Adrenal gland (tissue), 19 donors: ENCODE measurements at regions of chr14 and their contacts with region 1.

Region 1: GRCh38 chr14:75307700-75308379 is 29.2 kb downstream of the FOS start:
- DNase-seq: peak; percentile 79 to 95 (median 89)
- H3K4me3 ChIP-seq: no peak overlapping the region
- H3K27ac ChIP-seq: no peak overlapping the region
- H3K4me1 ChIP-seq: peaks cover 0 to 10% of the 10 kb centered on the region in 2 donors
- H3K27me3 ChIP-seq: no peaks in the 10 kb centered on the region
- CTCF ChIP-seq: peak; percentile 81 to 94 (median 91)
- POLR2A ChIP-seq: no peak

Region 2: DNA sequence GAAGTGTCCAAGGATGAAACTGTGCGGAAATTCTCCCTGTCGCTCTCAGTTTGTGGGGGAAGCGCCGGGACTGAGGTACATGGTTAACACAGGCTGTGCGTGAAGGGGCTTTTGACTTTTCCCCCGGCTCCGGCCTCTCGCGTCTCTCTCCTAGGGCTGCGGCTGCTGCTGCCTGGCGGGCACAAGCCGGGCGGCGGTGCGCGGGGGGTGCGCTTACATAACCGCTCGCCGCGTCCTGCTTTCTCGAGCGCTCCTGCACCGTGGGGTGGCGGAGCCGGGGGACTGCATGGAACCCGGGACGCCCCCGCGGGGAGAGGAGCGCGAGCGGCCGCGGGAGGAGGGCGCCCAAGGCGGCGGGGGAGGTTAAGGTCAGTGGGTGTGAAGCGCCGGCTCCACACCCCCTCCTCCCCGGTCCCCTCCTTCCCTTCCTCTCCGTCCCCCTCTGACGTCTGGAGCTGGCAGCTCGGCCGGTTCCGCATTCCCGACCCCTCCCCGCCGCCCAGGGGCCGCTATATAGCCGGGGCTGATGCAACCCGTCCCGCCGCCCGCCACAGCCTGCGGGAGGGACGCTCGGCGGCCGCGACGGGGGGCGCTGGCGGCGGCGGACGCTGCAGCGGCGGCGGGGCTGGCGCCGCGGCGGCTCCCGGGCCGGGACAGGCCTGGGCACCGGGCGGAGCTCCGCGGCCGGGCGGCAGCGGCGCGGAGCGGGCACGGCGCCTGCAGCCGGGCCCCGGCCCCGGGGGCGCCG is 119.8 kb after region 1 on chr14 and contains the start of gene JDP2:
- intact Hi-C with region 1: loop called in 1 of 2 experiments (anchors 5 kb)
- DNase-seq: peak; percentile 89 to 94 (median 92)
- H3K4me3 ChIP-seq: peak within 1 kb of the TSS; percentile 8 to 79 (median 48)
- H3K27ac ChIP-seq: peak within 1 kb of the TSS; percentile 50 to 94 (median 83)
- H3K4me1 ChIP-seq: peaks cover 11 to 34% of the 10 kb centered on the region in 2 donors
- H3K27me3 ChIP-seq: no peaks in the 10 kb centered on the region
- CTCF ChIP-seq: peak in 4 of 6 experiments; percentile 18 to 47 (median 36)
- POLR2A ChIP-seq: peak; percentile 73 to 88
- total RNA-seq, gene JDP2: 6.8 to 59.8 (median 33.0) TPM

Region 3: DNA sequence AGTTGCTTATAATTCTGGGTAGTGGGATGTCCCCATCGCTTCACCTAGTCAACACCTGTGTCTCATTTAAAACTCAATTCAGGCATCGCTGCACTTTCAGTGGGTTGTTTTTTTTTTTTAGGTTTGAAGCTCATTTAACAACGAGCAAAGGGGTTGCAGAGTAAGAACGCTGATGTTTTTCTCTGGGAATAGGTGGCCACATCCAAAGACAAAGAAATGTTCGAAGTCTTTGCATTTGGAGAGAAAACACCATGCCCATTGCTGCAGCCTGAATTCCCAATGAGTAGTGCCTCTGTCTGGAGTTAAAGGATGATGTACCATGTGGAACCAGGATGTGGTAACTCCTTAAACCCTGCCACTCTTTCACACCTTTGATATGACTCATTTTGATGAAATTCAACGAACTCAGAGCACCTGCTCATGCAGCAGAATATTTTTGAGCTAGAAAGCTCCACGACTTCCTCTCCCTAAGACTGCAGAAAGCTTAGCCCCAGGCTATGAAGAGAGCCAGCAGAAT is 179.4 kb after region 1 on chr14:
- intact Hi-C with region 1: loop called (anchors 5 kb)
- DNase-seq: no peak
- H3K4me3 ChIP-seq: no peak overlapping the region
- H3K27ac ChIP-seq: no peak overlapping the region
- H3K4me1 ChIP-seq: no peaks in the 10 kb centered on the region
- H3K27me3 ChIP-seq: no peaks in the 10 kb centered on the region
- CTCF ChIP-seq: no peak
- POLR2A ChIP-seq: no peak

Region 4: GRCh38 chr14:75542588-75543091 is 234.8 kb after region 1 on chr14:
- intact Hi-C with region 1: no loop called
- DNase-seq: peak; percentile 50 to 94 (median 90)
- H3K4me3 ChIP-seq: no peak overlapping the region
- H3K27ac ChIP-seq: peak overlapping the region; percentile 25 to 86 (median 60)
- H3K4me1 ChIP-seq: peaks cover 10 to 16% of the 10 kb centered on the region in 2 donors
- H3K27me3 ChIP-seq: no peaks in the 10 kb centered on the region
- CTCF ChIP-seq: no peak
- POLR2A ChIP-seq: peak in 1 of 2 donors; percentile 21